ENCODE measurements at regions of chr18 and their contacts with region 1.

Region 1: DNA sequence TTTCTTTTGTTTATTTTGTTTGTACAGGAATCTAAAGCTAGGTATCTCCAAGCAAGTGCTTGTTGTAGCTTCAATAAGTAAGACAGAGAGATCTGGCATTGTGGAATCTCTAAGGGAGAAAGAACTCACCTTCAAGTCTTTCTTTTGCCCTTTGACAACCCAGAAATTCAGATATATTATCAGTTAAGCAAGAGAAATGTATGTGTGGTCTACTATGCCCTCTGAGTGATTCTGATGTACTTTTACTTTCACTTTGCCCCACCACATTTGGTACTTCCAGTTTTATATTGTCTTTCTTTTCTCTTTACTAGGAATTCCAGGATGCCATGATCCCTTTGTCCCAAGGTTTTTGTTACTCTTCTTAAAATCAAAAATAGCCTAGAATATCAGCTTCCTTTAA is 259.6 kb upstream of the PIK3C3 start:
- DNase-seq: no peak
- ATAC-seq: no peak
- H3K4me3 ChIP-seq: no peak overlapping the region
- H3K27ac ChIP-seq: no peak overlapping the region
- H3K4me1 ChIP-seq: no peaks in the 10 kb centered on the region
- H3K27me3 ChIP-seq: no peaks in the 10 kb centered on the region
- CTCF ChIP-seq: no peak
- POLR2A ChIP-seq: no peak

Region 2: GRCh38 chr18:41789001-41789400 is 93.6 kb after region 1 on chr18:
- in situ Hi-C with region 1: loop called in 1 of 4 experiments (anchors 25 kb)
- intact Hi-C with region 1: no loop called
- DNase-seq: no peak
- ATAC-seq: no peak
- H3K4me3 ChIP-seq: no peak overlapping the region
- H3K27ac ChIP-seq: no peak overlapping the region
- H3K4me1 ChIP-seq: no peaks in the 10 kb centered on the region
- H3K27me3 ChIP-seq: no peaks in the 10 kb centered on the region
- CTCF ChIP-seq: no peak
- POLR2A ChIP-seq: no peak

Measured in gastrocnemius medialis (tissue), 4 donors.